ENCODE measurements at regions of chrX and their contacts with region 1.

Region 1: GRCh38 chrX:8738588-8739189 is 6.8 kb upstream of the ANOS1 start:
- DNase-seq: peak in 1 of 2 experiments; percentile 31
- ATAC-seq: peak; percentile 56 to 64; a peak in 3 of 6 replicates
- H3K4me3 ChIP-seq: no peak overlapping the region
- H3K27ac ChIP-seq: no peak overlapping the region
- H3K4me1 ChIP-seq: no peaks in the 10 kb centered on the region
- CTCF ChIP-seq: peak; percentile 74
- EP300 ChIP-seq: no peak
- POLR2A ChIP-seq: no peak
- RAD21 ChIP-seq: peak; percentile 68 to 69

Region 2: DNA sequence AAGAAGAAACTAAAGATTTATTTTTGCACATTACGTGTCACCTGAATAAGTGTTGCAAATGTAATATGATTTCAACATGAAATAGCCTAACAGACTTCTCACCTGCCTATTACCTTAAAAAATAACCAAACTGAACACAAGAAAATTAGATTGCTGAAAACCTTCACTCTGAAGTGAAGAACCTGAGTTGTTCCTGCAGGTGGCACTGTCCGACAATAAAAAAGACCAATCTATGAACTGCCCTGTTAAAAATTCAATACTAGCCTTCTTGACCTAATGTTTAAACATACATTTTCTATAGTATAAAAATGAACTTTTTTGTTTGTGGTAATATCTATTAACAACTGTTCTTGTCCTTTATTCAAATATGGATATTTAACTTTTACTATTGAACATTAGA is 742.3 kb before region 1 on chrX:
- CTCF ChIA-PET with region 1: interaction called, 10 read pairs
- POLR2A ChIA-PET with region 1: no interaction called
- DNase-seq: peak in 1 of 2 experiments; percentile 34
- ATAC-seq: peak in 1 of 2 experiments; percentile 61; a peak in 2 of 6 replicates
- H3K4me3 ChIP-seq: no peak overlapping the region
- H3K27ac ChIP-seq: no peak overlapping the region
- H3K4me1 ChIP-seq: no peaks in the 10 kb centered on the region
- CTCF ChIP-seq: peak; percentile 54
- EP300 ChIP-seq: no peak
- POLR2A ChIP-seq: no peak
- RAD21 ChIP-seq: peak; percentile 63 to 71

Region 3: DNA sequence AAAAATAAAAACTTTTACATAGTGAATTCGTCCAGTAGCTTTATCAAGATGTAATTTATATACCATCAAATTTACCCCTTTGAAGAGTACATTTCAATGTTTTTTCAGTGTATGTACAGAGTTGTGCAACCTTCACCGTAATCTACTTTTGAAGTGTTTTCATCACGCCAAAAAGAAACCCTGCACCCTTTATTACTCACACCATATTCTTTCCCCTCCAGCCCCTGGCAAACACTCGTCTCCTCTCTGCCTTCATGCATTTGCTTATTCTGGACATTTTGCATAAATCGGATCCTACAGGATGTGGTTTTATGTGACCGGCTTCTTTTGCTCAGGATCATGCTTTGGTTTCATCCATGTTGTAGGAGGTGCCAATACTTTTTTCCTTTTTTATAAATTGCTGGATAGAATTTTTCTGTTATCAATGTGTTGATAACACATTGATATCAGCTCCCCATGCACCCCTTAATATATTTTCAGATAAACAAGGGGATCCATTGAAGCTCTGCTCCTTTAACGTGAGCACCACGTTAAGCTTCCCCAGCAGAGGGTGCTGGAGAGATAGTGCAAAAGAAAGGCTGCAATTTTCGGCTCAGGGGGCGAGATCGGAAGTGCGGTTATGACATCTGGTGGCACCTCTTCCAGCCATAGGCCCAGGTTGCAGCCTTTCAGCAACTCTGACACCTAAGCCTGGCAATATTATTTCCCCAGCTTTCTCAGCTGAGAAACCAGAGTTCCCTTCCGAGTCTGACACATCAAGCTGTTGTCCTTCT is 374.1 kb before region 1 on chrX:
- CTCF ChIA-PET with region 1: interaction called, 11 read pairs
- POLR2A ChIA-PET with region 1: no interaction called
- DNase-seq: peak in 1 of 2 experiments; percentile 15
- ATAC-seq: peak in 1 of 2 experiments; percentile 51; a peak in 2 of 6 replicates
- H3K4me3 ChIP-seq: no peak overlapping the region
- H3K27ac ChIP-seq: no peak overlapping the region
- H3K4me1 ChIP-seq: no peaks in the 10 kb centered on the region
- CTCF ChIP-seq: 0 out of 3 replicates have a peak, but pooled peaks have one; percentile 9
- EP300 ChIP-seq: no peak
- POLR2A ChIP-seq: no peak
- RAD21 ChIP-seq: peak in 1 of 2 experiments; percentile 33; a peak in 2 of 5 replicates

Region 4: GRCh38 chrX:8714164-8714563 is 24.5 kb before region 1 on chrX:
- CTCF ChIA-PET with region 1: no interaction called
- POLR2A ChIA-PET with region 1: no interaction called
- DNase-seq: no peak
- ATAC-seq: no peak
- H3K4me3 ChIP-seq: no peak overlapping the region
- H3K27ac ChIP-seq: no peak overlapping the region
- H3K4me1 ChIP-seq: no peaks in the 10 kb centered on the region
- CTCF ChIP-seq: no peak
- EP300 ChIP-seq: no peak
- POLR2A ChIP-seq: no peak
- RAD21 ChIP-seq: no peak

Region 5: DNA sequence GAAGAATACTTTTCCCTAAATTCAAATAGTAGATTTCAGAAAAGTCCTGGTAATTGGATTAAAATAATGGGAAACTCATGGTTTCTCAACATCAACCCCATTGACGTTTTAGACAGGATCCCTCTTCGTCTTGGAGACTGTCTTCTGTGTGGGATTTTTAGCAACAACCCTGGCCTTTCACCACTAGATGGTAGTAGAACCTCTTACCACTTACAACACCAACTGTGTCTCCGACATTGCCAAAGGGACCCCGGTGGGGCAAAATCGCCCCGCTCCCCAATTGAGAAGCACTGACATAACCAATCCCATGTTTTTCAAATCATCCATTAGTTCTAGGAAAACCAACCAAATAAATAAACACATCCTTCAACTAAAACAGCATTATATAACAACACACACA is 10.2 kb after region 1 on chrX:
- CTCF ChIA-PET with region 1: interaction called, 12 read pairs
- POLR2A ChIA-PET with region 1: no interaction called
- DNase-seq: peak; percentile 39 to 43
- ATAC-seq: peak; percentile 84 to 88
- H3K4me3 ChIP-seq: no peak overlapping the region
- H3K27ac ChIP-seq: no peak overlapping the region
- H3K4me1 ChIP-seq: no peaks in the 10 kb centered on the region
- CTCF ChIP-seq: peak; percentile 50
- EP300 ChIP-seq: no peak
- POLR2A ChIP-seq: no peak
- RAD21 ChIP-seq: peak; percentile 46 to 49; a peak in 3 of 5 replicates